ENCODE measurements at regions of chr1 and their contacts with region 1.

Region 1: GRCh38 chr1:156659994-156660751 is 17.0 kb downstream of the NES start:
- DNase-seq: peak; percentile 74 to 95 (median 87)
- ATAC-seq: peak; percentile 74 to 87 (median 80)
- H3K4me3 ChIP-seq: peak overlapping the region in 1 of 2 donors; percentile 15
- H3K4me3 Mint-ChIP-seq: peak overlapping the region in 2 of 3 donors; percentile 17 to 52
- H3K27ac ChIP-seq: no peak overlapping the region
- H3K27ac Mint-ChIP-seq: peak overlapping the region; percentile 64 to 71
- H3K4me1 ChIP-seq: peaks cover 16 to 62% of the 10 kb centered on the region in 2 experiments
- H3K4me1 Mint-ChIP-seq: peaks cover 45 to 62% (median 52%) of the 10 kb centered on the region in 3 donors
- H3K27me3 ChIP-seq: peaks cover 3 to 46% of the 10 kb centered on the region in 2 experiments
- H3K27me3 Mint-ChIP-seq: peaks cover 24 to 25% of the 10 kb centered on the region in 2 donors

Region 2: DNA sequence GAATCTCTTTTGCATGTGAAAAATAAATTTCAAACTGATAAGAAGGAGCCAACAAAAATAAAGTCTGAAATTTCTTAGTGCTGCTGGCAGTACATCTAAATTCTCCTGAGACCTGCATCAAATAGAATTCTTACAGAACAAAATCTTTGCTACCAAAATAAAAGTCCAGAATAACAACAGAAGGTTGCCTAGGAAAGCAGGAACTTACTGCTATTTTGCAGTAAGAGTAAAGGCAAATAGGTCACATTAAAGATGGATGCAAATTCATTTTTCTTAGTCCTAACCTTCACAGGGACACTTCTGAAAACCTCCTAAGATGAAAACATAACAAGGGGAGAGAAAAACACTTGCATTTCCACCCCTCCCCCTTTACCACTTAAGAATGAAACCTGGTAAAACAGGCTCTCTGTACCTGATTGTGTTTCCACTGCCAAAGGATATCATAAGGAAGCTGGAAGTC is 1280.5 kb before region 1 on chr1:
- CTCF ChIA-PET with region 1: no interaction called
- POLR2A ChIA-PET with region 1: no interaction called
- DNase-seq: peak in 1 of 35 experiments; percentile 21
- ATAC-seq: no peak
- H3K4me3 ChIP-seq: no peak overlapping the region
- H3K4me3 Mint-ChIP-seq: no peak overlapping the region
- H3K27ac ChIP-seq: no peak overlapping the region
- H3K27ac Mint-ChIP-seq: peak overlapping the region; percentile 20 to 52
- H3K4me1 ChIP-seq: no peaks in the 10 kb centered on the region
- H3K4me1 Mint-ChIP-seq: peaks cover 8 to 9% (median 9%) of the 10 kb centered on the region in 3 donors
- H3K27me3 ChIP-seq: no peaks in the 10 kb centered on the region
- H3K27me3 Mint-ChIP-seq: no peaks in the 10 kb centered on the region

Region 3: GRCh38 chr1:156508163-156508887 is 151.8 kb before region 1 on chr1:
- CTCF ChIA-PET with region 1: no interaction called
- POLR2A ChIA-PET with region 1: no interaction called
- DNase-seq: peak in 1 of 35 experiments; percentile 56
- ATAC-seq: no peak
- H3K4me3 ChIP-seq: peak overlapping the region; percentile 4 to 12
- H3K4me3 Mint-ChIP-seq: peak overlapping the region in 2 of 3 donors; percentile 28 to 60
- H3K27ac ChIP-seq: peak overlapping the region; percentile 51
- H3K27ac Mint-ChIP-seq: peak overlapping the region; percentile 55 to 80
- H3K4me1 ChIP-seq: peaks cover 29 to 48% of the 10 kb centered on the region in 2 experiments
- H3K4me1 Mint-ChIP-seq: peaks cover 52 to 58% (median 58%) of the 10 kb centered on the region in 3 donors
- H3K27me3 ChIP-seq: peaks cover 0 to 5% of the 10 kb centered on the region in 2 experiments
- H3K27me3 Mint-ChIP-seq: no peaks in the 10 kb centered on the region

Region 4: DNA sequence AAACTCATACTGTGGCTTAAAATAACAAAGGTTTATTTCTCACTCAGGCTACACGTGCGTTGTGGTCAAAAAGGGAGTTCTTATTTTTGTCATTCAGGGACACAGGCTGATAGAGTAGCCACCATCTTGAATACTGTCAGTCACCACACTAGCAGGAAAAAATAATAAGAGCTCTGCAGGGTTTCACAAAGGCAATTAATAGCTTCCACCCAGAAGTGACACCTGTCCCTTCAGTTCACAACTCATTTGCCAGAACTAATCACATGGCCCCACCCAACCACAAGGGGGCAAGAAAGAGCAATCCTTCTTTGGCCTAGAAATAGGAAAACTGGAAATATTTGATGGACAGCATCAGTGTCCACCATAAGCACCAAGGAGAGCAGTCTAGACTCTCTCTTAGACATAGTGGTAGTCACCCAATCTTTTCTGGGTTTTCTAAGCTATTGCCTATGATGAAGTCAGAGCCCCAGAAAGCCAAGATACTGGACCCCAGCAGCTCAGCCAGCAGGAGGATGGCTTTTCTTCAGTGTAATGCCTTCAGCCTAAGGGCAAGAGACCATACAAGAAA is 32.8 kb before region 1 on chr1:
- CTCF ChIA-PET with region 1: interaction called, 4 to 10 read pairs
- POLR2A ChIA-PET with region 1: no interaction called
- DNase-seq: peak in 6 of 35 experiments; percentile 14 to 64 (median 27)
- ATAC-seq: peak in 1 of 4 experiments; percentile 40
- H3K4me3 ChIP-seq: no peak overlapping the region
- H3K4me3 Mint-ChIP-seq: no peak overlapping the region
- H3K27ac ChIP-seq: no peak overlapping the region
- H3K27ac Mint-ChIP-seq: no peak overlapping the region
- H3K4me1 ChIP-seq: peaks cover 0 to 24% of the 10 kb centered on the region in 2 experiments
- H3K4me1 Mint-ChIP-seq: peaks cover 13 to 17% (median 14%) of the 10 kb centered on the region in 3 donors
- H3K27me3 ChIP-seq: peaks cover 13 to 63% of the 10 kb centered on the region in 2 experiments
- H3K27me3 Mint-ChIP-seq: peaks cover 44 to 60% of the 10 kb centered on the region in 2 donors

Region 5: GRCh38 chr1:156705918-156706656 is 45.9 kb after region 1 on chr1:
- CTCF ChIA-PET with region 1: interaction called, 3 to 10 read pairs
- POLR2A ChIA-PET with region 1: no interaction called
- DNase-seq: peak; percentile 19 to 85 (median 59)
- ATAC-seq: peak; percentile 70 to 76 (median 73)
- H3K4me3 ChIP-seq: peak overlapping the region; percentile 55 to 61
- H3K4me3 Mint-ChIP-seq: peak overlapping the region; percentile 83 to 91 (median 86)
- H3K27ac ChIP-seq: peak overlapping the region; percentile 47
- H3K27ac Mint-ChIP-seq: peak overlapping the region; percentile 76 to 83
- H3K4me1 ChIP-seq: peaks cover 14 to 38% of the 10 kb centered on the region in 2 experiments
- H3K4me1 Mint-ChIP-seq: peaks cover 18 to 32% (median 30%) of the 10 kb centered on the region in 3 donors
- H3K27me3 ChIP-seq: peaks cover 7 to 47% of the 10 kb centered on the region in 2 experiments
- H3K27me3 Mint-ChIP-seq: peaks cover 7 to 29% of the 10 kb centered on the region in 2 donors

Region 6: DNA sequence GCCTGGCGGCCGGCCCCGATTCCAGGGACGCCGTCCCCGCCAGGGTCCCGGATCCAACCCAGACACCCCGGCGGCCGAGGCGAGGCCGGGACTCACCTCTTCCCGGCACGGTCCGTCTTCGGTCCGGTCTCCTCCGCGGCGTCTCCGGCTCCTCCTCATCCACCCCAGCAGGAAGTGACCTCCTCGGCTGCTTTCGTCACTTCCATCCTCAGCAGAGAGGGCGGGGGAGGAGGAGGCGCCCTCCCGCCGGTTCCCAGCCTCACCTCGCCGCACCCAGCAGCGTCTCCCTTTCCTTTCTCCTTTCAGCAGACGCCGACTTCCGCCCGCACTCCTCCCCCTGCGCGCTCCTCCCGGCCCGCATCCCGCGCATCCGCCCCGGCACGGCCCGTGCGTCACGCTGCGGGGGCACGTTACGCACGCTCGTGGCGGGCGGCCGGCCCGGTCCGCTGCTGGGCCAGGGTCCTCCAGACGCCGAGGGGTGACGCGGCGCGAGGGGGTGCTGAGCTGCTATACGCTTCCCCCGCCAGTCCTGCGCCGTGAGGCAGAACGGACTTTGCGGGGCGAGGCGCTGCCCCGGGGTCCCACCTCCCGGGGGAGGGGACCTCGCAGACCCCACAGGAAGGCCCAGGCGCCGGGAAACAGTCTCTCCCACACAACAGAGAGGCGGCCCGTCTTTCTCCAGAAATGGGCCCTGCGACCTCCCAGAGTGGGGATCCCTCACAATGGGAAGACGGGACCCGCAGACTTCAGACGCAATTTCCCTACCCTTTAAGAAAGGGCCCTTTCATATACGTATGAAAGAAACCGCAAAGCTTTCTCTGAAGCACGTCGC is 478.3 kb after region 1 on chr1 and contains the start of gene ETV3:
- CTCF ChIA-PET with region 1: interaction called in 1 of 2 experiments, 10 read pairs
- POLR2A ChIA-PET with region 1: no interaction called
- DNase-seq: peak; percentile 70 to 93 (median 83)
- ATAC-seq: peak; percentile 80 to 85 (median 82)
- H3K4me3 ChIP-seq: peak within 1 kb of the TSS; percentile 91 to 92
- H3K4me3 Mint-ChIP-seq: peak within 1 kb of the TSS; percentile 89 to 96 (median 95)
- H3K27ac ChIP-seq: peak within 1 kb of the TSS; percentile 98
- H3K27ac Mint-ChIP-seq: peak within 1 kb of the TSS; percentile 90 to 94
- H3K4me1 ChIP-seq: peaks cover 36 to 44% of the 10 kb centered on the region in 2 experiments
- H3K4me1 Mint-ChIP-seq: peaks cover 56 to 59% (median 56%) of the 10 kb centered on the region in 3 donors
- H3K27me3 ChIP-seq: no peaks in the 10 kb centered on the region
- H3K27me3 Mint-ChIP-seq: no peaks in the 10 kb centered on the region
- total RNA-seq, gene ETV3: 30.6 to 86.3 (median 33.4) TPM